ENCODE measurements at regions of chr9 and their contacts with region 1.

Region 1: DNA sequence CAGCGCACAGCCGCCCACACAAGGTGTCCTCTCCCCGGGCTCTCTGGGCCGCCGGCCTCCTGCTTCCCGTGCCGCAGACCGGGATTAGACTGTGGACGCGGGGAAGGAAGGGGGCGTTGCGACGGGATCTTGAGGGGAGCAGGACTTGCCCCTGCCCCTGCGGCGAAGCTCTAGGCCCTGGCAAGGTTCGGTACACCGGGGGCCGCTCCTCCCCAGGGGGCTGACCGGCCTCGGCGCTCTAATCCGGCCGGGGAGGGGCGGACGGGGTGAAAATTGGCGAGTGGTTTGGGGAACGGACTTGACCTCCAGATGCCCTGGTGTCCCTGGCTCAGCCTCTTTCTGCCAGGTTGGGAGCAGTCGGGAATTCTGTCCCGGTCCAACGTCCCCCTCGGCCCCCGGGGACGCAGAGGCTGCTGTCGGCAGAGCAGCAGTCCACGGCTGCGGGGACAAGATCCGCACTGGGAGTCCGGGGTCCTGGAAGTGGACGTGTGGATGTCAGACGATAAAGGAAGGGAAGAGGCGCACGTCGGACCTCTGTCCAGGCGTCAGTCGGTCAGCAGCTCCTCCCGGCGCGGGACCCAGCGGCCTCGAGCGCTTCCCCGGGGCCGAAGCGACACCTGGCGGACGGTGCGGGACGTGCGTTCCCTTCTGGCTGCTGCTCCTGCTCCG is 1.9 kb upstream of the CNTFR start:
- DNase-seq: peak; percentile 95
- H3K4me3 ChIP-seq: peak overlapping the region in 1 of 2 experiments; percentile 46; a peak in 1 of 4 replicates
- H3K27ac ChIP-seq: no peak overlapping the region
- H3K4me1 ChIP-seq: peaks cover 0 to 29% of the 10 kb centered on the region in 2 experiments; a peak in 1 of 4 replicates
- H3K27me3 ChIP-seq: peaks cover 43% of the 10 kb centered on the region
- CTCF ChIP-seq: peak; percentile 75
- EP300 ChIP-seq: no peak
- RAD21 ChIP-seq: peak; percentile 95

Region 2: DNA sequence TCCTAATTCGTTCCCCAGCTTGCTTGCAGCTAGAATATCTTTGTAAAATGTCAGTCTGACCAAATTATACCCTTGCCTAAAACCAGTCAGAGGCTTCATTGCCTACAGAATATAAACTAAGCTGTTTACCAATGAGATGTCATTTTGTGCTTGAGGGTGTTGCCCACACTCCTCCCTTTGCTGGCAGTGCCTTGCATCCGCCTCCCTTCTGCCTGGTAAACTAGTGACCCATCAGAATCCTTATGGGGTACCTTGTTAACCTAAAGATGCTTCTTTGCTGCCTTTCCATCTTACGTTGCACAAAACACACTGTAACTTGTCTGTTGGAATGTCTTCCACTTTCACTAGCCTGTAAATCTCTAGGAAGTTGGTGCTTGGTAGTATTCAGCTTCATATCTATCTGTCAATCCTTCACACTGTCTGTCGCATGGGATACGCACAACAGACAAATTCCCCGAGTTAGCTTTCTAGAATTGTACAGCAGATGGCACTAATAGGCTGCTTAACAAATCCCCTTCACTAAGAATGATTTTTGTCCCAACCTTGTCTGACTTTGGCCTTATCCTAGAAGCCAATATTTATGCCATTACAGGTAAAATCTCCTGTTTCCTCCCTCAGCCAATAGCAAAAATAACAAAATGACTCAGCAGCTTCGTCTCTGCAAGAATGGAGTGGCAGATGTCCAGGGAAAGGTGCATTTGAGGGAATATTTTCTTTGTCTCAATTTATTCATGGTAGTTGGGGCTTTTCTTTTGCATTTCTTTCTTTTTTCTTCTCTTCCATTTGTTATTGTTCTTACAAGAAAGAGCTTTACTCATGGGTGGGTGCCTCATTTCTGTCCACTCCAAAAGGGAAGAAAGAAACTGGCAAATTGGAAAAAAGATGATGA is 259.1 kb before region 1 on chr9:
- CTCF ChIA-PET with region 1: interaction called, 32 read pairs
- POLR2A ChIA-PET with region 1: no interaction called
- DNase-seq: peak; percentile 46
- H3K4me3 ChIP-seq: no peak overlapping the region; a peak in 1 of 4 replicates
- H3K27ac ChIP-seq: no peak overlapping the region
- H3K4me1 ChIP-seq: peaks cover 0 to 6% of the 10 kb centered on the region in 2 experiments; a peak in 2 of 4 replicates
- H3K27me3 ChIP-seq: no peaks in the 10 kb centered on the region
- CTCF ChIP-seq: peak; percentile 62
- EP300 ChIP-seq: no peak
- RAD21 ChIP-seq: peak; percentile 88

Region 3: GRCh38 chr9:34437006-34437925 is 154.1 kb before region 1 on chr9:
- CTCF ChIA-PET with region 1: interaction called, 34 read pairs
- POLR2A ChIA-PET with region 1: no interaction called
- DNase-seq: peak; percentile 74
- H3K4me3 ChIP-seq: no peak overlapping the region
- H3K27ac ChIP-seq: peak overlapping the region in 1 of 2 experiments; percentile 59; a peak in 2 of 4 replicates
- H3K4me1 ChIP-seq: peaks cover 12 to 21% of the 10 kb centered on the region in 2 experiments; a peak in 3 of 4 replicates
- H3K27me3 ChIP-seq: no peaks in the 10 kb centered on the region
- CTCF ChIP-seq: peak; percentile 92
- EP300 ChIP-seq: no peak
- RAD21 ChIP-seq: peak; percentile 94

Region 4: DNA sequence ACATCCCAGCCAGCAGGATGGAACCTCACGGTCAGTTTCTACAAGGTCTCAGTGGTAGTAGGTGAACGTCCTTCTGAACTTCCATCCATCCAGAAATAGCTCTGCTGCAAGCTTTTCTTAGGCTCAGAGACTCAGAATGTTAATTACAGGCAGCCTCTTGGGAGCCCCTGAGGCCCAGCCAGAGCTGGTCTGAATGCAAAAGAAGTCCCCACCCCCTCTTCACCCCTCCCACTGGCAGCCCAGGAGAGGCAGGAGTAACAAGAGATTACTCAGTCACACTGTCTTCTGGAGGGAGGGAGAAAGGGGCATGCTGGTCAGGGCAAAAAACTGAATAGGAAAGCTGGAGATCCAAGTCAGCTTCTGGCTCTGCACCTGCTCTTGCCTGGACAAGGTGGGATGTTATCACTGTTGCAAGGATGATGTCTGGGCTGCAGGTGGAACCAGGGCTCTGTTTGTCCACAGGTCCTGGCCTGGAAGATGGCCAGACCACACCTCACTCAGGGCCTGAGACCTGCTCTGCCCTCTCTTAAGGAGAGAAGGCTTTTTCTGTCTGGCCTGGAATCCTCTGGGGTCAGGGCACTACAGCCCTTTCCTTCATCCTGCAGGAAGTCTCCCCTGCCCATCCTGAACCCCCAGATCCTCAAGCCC is 77.7 kb before region 1 on chr9:
- CTCF ChIA-PET with region 1: interaction called, 38 read pairs
- POLR2A ChIA-PET with region 1: no interaction called
- DNase-seq: no peak
- H3K4me3 ChIP-seq: no peak overlapping the region
- H3K27ac ChIP-seq: no peak overlapping the region
- H3K4me1 ChIP-seq: peaks cover 0 to 16% of the 10 kb centered on the region in 2 experiments; a peak in 1 of 4 replicates
- H3K27me3 ChIP-seq: no peaks in the 10 kb centered on the region; the same call in 1 of the 2 replicates
- CTCF ChIP-seq: no peak
- EP300 ChIP-seq: no peak
- RAD21 ChIP-seq: no peak

Region 5: DNA sequence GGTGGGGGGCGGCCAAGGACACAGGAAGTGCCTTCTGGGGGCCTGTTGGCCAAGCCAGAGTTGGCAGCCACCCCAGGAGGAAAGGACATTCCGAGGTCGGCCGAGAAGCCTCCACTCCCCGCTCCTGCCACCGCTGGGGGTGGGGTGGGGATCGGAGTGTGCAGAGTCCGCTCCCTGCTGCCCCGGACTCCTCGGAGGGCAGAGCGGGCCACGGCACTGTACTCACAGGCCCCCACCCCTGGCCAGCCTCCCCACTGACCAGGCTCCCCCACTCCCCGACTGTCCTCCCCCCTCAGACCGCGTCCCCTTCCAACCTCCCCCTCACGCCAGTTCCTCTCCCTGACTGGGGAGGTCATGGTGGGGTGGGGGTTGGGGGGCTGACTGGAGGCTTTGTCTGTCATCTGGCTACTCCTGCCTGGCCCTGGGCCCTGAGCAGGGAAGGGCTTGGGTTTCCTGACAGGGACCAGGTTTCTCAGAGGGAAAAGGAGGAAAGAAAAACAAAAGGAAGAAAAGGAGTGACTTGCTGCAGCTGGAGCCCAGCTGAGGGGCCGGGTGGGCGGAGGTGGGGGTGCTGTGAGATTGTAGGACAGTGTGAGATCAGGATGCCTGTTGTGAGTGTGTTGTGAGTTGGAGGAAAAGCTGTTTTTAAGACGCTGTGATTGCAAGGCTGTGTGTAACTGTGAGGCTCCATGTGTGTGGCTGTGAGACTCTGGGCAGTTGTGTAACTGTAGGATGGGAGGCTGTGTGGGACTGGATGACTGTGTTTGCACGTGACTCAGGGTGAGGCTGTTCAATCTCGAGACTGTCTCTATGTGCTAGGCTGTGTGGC is 31.5 kb before region 1 on chr9:
- CTCF ChIA-PET with region 1: interaction called, 507 read pairs
- POLR2A ChIA-PET with region 1: interaction called, 9 read pairs
- DNase-seq: peak; percentile 79
- H3K4me3 ChIP-seq: no peak overlapping the region
- H3K27ac ChIP-seq: peak overlapping the region in 1 of 2 experiments; percentile 74; a peak in 2 of 4 replicates
- H3K4me1 ChIP-seq: peaks cover 0 to 73% of the 10 kb centered on the region in 2 experiments; a peak in 2 of 4 replicates
- H3K27me3 ChIP-seq: no peaks in the 10 kb centered on the region
- CTCF ChIP-seq: no peak
- EP300 ChIP-seq: no peak
- RAD21 ChIP-seq: no peak

Region 6: GRCh38 chr9:34611829-34612630 is 20.6 kb after region 1 on chr9 and contains the start of gene RPP25L:
- CTCF ChIA-PET with region 1: interaction called, 112 read pairs
- POLR2A ChIA-PET with region 1: no interaction called
- DNase-seq: peak; percentile 93
- H3K4me3 ChIP-seq: peak within 1 kb of the TSS; percentile 66 to 84
- H3K27ac ChIP-seq: peak within 1 kb of the TSS; percentile 73 to 75
- H3K4me1 ChIP-seq: peaks cover 0 to 36% of the 10 kb centered on the region in 2 experiments; a peak in 1 of 4 replicates
- H3K27me3 ChIP-seq: no peaks in the 10 kb centered on the region
- CTCF ChIP-seq: no peak
- EP300 ChIP-seq: no peak
- RAD21 ChIP-seq: no peak
- polyA plus RNA-seq, gene RPP25L: 46.3 and 47.6 TPM in 2 replicates